Activated T-helper 2 cell treated with anti-CD3 and anti-CD28 coated beads, Interferon-gamma antibody, Interleukin-2, Interleukin-4, amounts not matched to agents 10 μg/mL and 5 μg/mL and 100 μg/mL, durations not matched to agents 14 hours and 24 hours and 36 hours (primary cell): ENCODE measurements at regions of chr17 and their contacts with region 1.

Region 1: GRCh38 chr17:7314719-7315569 is at the start of gene GPS2:
- DNase-seq: peak; percentile 91
- H3K4me3 Mint-ChIP-seq: peak within 1 kb of the TSS; percentile 91
- H3K27ac Mint-ChIP-seq: peak within 1 kb of the TSS; percentile 91
- H3K4me1 Mint-ChIP-seq: peaks cover 39% of the 10 kb centered on the region
- H3K27me3 Mint-ChIP-seq: no peaks in the 10 kb centered on the region
- total RNA-seq, gene GPS2: 57.6 and 64.9 TPM in 2 replicates

Region 2: GRCh38 chr17:7329374-7329996 is 14.5 kb after region 1 on chr17:
- intact Hi-C with region 1: loop called (anchors 1 kb)
- DNase-seq: peak; percentile 96
- H3K4me3 Mint-ChIP-seq: peak overlapping the region; percentile 87
- H3K27ac Mint-ChIP-seq: peak overlapping the region; percentile 95
- H3K4me1 Mint-ChIP-seq: peaks cover 26% of the 10 kb centered on the region
- H3K27me3 Mint-ChIP-seq: no peaks in the 10 kb centered on the region